Activated CD4-positive, alpha-beta memory T cell treated with anti-CD3 and anti-CD28 coated beads for 36 hours (primary cell): ENCODE measurements at regions of chr2 and their contacts with region 1.

Region 1: GRCh38 chr2:68467077-68467960 is at the starts of genes APLF and FBXO48:
- DNase-seq: peak; percentile 99
- H3K4me3 Mint-ChIP-seq: peak within 1 kb of the TSS; percentile 97
- H3K27ac Mint-ChIP-seq: peak within 1 kb of the TSS; percentile 94
- H3K4me1 Mint-ChIP-seq: peaks cover 44% of the 10 kb centered on the region
- H3K27me3 Mint-ChIP-seq: no peaks in the 10 kb centered on the region
- total RNA-seq, gene APLF: 3.0 to 3.1 TPM
- total RNA-seq, gene FBXO48: 2.3 to 2.6 TPM

Region 2: DNA sequence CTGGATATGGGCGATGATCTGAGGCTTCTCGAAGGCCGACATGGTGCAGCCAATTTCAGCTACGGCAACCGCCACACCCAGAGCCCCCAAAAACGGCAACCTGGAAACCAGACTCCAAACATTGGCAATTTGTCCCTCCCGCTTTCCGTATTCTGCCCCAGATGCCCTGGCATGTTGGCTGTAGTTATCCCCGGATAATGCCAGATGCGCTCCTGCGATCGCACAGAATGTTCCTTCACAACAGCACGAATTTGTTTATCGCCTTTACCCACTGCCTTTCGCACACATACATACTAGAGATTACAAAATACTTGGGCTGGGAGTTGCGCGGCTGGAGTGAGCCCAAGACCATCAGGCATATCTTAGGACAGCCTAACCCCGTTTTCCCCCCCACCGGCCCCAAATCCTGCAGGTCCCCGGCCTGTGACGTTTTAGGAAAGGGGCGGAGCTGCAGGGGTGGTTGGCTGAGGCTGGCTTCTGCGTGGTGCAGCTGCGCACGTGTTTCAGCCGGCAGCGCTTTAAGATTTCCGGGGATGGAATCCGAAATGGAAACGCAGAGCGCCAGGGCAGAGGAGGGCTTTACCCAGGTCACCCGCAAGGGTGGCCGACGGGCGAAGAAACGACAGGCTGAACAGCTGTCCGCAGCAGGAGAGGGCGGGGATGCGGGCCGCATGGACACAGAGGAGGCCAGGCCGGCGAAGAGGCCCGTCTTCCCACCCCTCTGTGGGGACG is 309.8 kb before region 1 on chr2 and contains the start of gene PNO1:
- CTCF ChIA-PET with region 1: no interaction called
- POLR2A ChIA-PET with region 1: no interaction called
- intact Hi-C with region 1: loop called (anchors 1 kb)
- DNase-seq: peak; percentile 98
- H3K4me3 Mint-ChIP-seq: peak within 1 kb of the TSS; percentile 95
- H3K27ac Mint-ChIP-seq: peak within 1 kb of the TSS; percentile 99
- H3K4me1 Mint-ChIP-seq: peaks cover 42% of the 10 kb centered on the region
- H3K27me3 Mint-ChIP-seq: no peaks in the 10 kb centered on the region
- total RNA-seq, gene PNO1: 16.3 to 16.4 TPM

Region 3: GRCh38 chr2:68345129-68345875 is 122.0 kb before region 1 on chr2:
- CTCF ChIA-PET with region 1: no interaction called
- POLR2A ChIA-PET with region 1: no interaction called
- intact Hi-C with region 1: no loop called
- DNase-seq: no peak
- H3K4me3 Mint-ChIP-seq: no peak overlapping the region
- H3K27ac Mint-ChIP-seq: no peak overlapping the region
- H3K4me1 Mint-ChIP-seq: no peaks in the 10 kb centered on the region
- H3K27me3 Mint-ChIP-seq: peaks cover 34% of the 10 kb centered on the region

Region 4: DNA sequence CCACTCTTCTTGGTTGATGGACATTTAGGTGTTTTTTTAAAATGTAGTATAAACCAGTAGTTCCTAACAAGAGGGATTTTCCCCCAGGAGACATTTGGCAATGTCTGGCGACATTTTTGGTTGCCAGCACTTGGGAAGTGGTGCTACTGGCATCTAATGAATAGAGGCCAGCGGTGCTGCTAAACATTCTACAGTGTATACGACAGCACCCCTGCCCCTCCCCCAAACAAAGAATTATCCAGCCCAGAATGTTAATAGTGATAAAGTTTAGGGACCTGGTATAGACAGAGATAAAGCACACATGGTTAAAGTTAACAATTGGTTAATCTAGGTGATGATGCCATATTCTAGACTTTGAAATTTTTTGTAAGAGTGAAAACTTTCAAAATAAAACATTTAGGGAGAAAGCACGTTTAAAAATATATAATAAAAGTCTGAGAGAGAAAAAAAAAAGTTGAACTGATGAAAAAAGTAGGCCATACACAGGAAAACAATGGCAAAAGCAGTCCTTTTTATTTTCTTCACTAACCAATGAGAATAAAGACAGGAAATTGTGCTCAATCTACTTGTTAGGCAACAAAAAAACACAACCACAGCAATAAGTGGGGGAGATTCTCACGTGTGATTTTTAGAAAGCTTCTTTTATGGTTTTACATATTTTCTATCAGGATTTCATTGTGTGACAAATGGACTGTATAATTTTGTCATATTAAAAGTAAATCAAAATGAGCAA is 15.0 kb before region 1 on chr2:
- CTCF ChIA-PET with region 1: interaction called, 36 read pairs
- POLR2A ChIA-PET with region 1: interaction called, 3 read pairs
- intact Hi-C with region 1: no loop called
- DNase-seq: no peak
- H3K4me3 Mint-ChIP-seq: no peak overlapping the region
- H3K27ac Mint-ChIP-seq: peak overlapping the region; percentile 1
- H3K4me1 Mint-ChIP-seq: peaks cover 6% of the 10 kb centered on the region
- H3K27me3 Mint-ChIP-seq: no peaks in the 10 kb centered on the region

Region 5: DNA sequence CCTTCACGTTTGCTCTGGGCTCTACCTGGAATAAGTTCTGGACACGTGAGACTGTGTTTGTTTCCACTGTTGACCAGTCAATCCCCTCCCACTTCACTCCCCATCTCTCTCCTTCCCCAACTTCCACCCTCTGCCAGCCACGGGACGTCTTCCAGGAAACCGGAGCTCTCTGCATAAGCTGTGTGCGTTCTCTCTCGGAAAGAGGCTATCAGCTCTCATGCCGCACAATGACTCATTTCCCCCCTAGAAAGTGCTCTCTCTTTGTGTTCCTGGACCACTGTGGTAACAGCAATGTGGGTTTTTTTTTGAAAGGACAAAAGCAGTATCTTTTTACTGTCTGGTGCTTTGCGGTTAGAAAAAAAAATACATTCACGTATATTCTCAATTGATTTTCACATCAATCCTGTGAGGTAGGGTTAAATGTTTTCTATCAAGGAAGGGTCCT is 186.2 kb after region 1 on chr2:
- CTCF ChIA-PET with region 1: interaction called, 4 read pairs
- POLR2A ChIA-PET with region 1: interaction called, 4 read pairs
- intact Hi-C with region 1: loop called (anchors 2 kb)
- DNase-seq: peak; percentile 71
- H3K4me3 Mint-ChIP-seq: no peak overlapping the region
- H3K27ac Mint-ChIP-seq: peak overlapping the region; percentile 20
- H3K4me1 Mint-ChIP-seq: peaks cover 34% of the 10 kb centered on the region
- H3K27me3 Mint-ChIP-seq: peaks cover 20% of the 10 kb centered on the region

Region 6: GRCh38 chr2:68734688-68735525 is 267.6 kb after region 1 on chr2 and contains the start of gene ARHGAP25:
- CTCF ChIA-PET with region 1: interaction called, 14 read pairs
- POLR2A ChIA-PET with region 1: interaction called, 10 read pairs
- intact Hi-C with region 1: loop called (anchors 1 kb)
- DNase-seq: peak; percentile 87
- H3K4me3 Mint-ChIP-seq: no peak within 1 kb of the TSS
- H3K27ac Mint-ChIP-seq: no peak within 1 kb of the TSS
- H3K4me1 Mint-ChIP-seq: peaks cover 36% of the 10 kb centered on the region
- H3K27me3 Mint-ChIP-seq: no peaks in the 10 kb centered on the region
- total RNA-seq, gene ARHGAP25: 79.8 to 87.7 TPM

Region 7: DNA sequence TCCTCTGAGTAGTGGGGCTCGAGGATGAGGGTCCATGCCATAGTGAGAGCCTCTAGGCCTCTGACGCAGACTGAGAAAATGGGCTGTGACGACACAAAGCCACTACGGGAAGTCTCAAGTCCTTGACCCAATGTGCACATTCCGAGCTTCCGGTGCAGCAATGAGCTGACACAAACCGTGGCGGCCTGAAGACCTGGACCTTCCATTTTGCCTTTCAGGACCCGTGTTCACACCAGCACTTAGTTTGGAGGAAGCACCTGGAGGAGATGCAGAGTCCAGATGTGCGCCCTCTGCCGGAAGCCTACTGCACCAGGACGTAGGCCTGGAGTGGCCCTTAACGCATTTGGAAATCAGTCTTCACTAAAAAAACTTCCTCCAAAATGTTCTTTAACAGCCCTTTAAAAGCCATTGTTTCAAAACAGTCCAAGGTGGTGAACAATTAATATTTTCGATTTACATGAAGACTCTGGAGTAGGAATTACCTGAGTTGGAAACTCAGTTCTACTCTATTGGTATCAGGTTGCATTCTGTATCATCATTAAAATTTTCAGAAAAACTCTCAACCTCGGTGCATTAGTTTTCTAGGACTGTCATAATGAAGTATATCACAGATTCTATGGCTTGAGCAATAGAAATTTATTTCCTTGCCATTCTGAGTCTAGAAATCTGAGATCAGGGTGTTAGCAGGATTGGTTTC is 370.0 kb after region 1 on chr2:
- CTCF ChIA-PET with region 1: interaction called, 12 read pairs
- POLR2A ChIA-PET with region 1: no interaction called
- intact Hi-C with region 1: loop called (anchors 1 kb)
- DNase-seq: peak; percentile 77
- H3K4me3 Mint-ChIP-seq: no peak overlapping the region
- H3K27ac Mint-ChIP-seq: peak overlapping the region; percentile 63
- H3K4me1 Mint-ChIP-seq: peaks cover 47% of the 10 kb centered on the region
- H3K27me3 Mint-ChIP-seq: no peaks in the 10 kb centered on the region

Region 8: DNA sequence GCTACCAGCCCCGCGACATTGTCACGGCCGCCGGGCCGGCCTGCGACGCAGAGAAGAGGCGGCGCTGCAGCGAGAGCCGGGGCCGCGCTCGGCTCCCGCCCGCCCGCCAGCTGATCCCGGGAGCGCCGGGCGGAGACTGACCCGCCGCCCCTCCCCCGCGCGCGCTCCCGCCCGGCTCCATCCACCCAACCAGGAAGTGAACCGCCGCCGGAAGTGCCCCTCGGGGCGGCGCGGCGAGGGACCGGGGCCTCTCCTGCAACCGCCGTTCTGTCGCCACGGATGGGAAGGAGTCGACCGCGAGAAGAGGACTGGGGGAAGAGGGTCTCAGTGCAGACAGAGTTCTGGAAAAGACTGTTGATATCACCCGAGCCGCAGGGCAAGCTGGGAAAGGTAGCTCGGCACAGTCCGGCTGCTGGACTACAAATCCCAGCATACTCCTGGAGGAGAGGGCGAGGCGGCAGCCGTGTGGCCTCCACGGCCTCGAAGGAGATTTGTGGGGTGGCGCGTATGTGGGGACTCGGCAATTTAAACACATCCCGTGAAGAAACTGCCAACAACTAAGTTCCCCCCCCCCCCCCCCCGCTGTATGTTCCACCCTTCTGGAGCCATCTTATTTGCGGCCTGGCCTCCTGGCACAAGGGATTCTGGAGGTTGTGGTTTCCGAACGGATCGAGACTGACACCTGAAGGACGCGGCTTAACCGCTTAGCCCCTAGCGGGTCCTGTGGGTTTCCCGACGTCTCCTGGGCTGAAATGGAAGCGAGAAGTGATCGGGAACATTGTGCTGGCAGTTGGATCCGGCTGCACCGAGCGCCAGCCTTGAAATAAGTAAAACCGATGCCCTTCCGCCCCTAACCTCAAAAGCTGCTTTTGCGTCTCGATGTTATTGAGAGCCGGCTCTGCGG is 1176.5 kb after region 1 on chr2 and contains the start of gene AAK1:
- CTCF ChIA-PET with region 1: no interaction called
- POLR2A ChIA-PET with region 1: no interaction called
- intact Hi-C with region 1: loop called (anchors 5 kb)
- DNase-seq: peak; percentile 91
- H3K4me3 Mint-ChIP-seq: peak within 1 kb of the TSS; percentile 86
- H3K27ac Mint-ChIP-seq: peak within 1 kb of the TSS; percentile 99
- H3K4me1 Mint-ChIP-seq: peaks cover 52% of the 10 kb centered on the region
- H3K27me3 Mint-ChIP-seq: no peaks in the 10 kb centered on the region
- total RNA-seq, gene AAK1: 95.2 to 99.3 TPM